ENCODE measurements at regions of chr17 and their contacts with region 1.

Region 1: GRCh38 chr17:40191237-40192208 is 14.3 kb downstream of the RAPGEFL1 start:
- DNase-seq: peak; percentile 95
- H3K4me3 ChIP-seq: peak overlapping the region; percentile 60 to 80 (median 62)
- H3K27ac ChIP-seq: peak overlapping the region; percentile 55 to 75 (median 74)
- H3K4me1 ChIP-seq: peaks cover 17 to 27% (median 22%) of the 10 kb centered on the region in 4 donors
- H3K27me3 ChIP-seq: no peaks in the 10 kb centered on the region
- CTCF ChIP-seq: peak; percentile 65 to 73 (median 72)
- EP300 ChIP-seq: no peak
- POLR2A ChIP-seq: no peak

Region 2: GRCh38 chr17:40230670-40231069 is 39.1 kb after region 1 on chr17:
- intact Hi-C with region 1: loop called (anchors 5 kb)
- DNase-seq: no peak
- H3K4me3 ChIP-seq: no peak overlapping the region
- H3K27ac ChIP-seq: no peak overlapping the region
- H3K4me1 ChIP-seq: peaks cover 3 to 19% (median 9%) of the 10 kb centered on the region in 4 donors
- H3K27me3 ChIP-seq: no peaks in the 10 kb centered on the region
- CTCF ChIP-seq: no peak
- EP300 ChIP-seq: no peak
- POLR2A ChIP-seq: no peak

Measured in esophagus muscularis mucosa (tissue), 4 donors.